CD8-positive, alpha-beta T cell (primary cell): ENCODE measurements at regions of chr11 and their contacts with region 1.

Region 1: DNA sequence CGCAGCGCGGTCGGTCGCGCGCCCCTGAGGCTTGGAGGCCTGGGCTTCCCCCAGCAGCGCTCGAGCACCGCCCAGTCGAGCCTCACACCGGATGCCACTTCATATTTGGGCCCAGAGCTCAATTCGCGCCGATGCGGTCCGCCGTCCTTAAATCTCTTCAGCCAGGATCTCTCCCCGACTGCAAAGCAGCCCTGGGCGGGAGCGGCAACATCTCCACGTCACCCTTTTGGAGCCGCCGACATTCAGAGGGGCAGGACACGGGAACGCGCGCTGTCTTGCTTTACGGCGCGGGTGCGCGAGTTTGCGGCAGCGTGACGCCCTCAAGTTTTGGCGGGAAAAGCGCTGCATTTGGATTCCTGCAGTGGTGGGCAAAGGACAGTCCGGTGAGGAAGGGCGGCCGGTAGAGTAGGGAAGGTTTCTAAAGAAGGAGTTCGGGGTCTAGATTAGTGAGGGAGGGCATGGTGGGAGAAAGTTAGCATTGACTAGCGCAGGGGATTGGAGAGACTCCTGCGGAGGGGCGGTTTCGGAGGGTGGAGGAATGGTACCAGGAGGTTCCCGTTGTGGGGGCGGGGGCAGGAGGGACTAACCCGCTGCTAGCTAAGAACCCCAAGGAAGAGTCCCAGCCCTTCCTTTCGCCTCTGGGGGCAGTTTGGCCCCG is 796 bp downstream of the CHEK1 start:
- DNase-seq: peak; percentile 62 to 90 (median 81)
- ATAC-seq: peak; percentile 91
- H3K4me3 ChIP-seq: peak overlapping the region; percentile 77 to 91
- H3K4me3 Mint-ChIP-seq: peak overlapping the region; percentile 100
- H3K27ac ChIP-seq: peak overlapping the region; percentile 91 to 97
- H3K27ac Mint-ChIP-seq: peak overlapping the region; percentile 97
- H3K4me1 ChIP-seq: peaks cover 12% of the 10 kb centered on the region
- H3K4me1 Mint-ChIP-seq: peaks cover 17% of the 10 kb centered on the region
- H3K27me3 ChIP-seq: no peaks in the 10 kb centered on the region
- H3K27me3 Mint-ChIP-seq: no peaks in the 10 kb centered on the region
- CTCF ChIP-seq: peak; percentile 7

Region 2: GRCh38 chr11:124380585-124380984 is 1245.2 kb before region 1 on chr11:
- CTCF ChIA-PET with region 1: no interaction called
- POLR2A ChIA-PET with region 1: no interaction called
- intact Hi-C with region 1: no loop called
- DNase-seq: no peak
- ATAC-seq: no peak
- H3K4me3 ChIP-seq: no peak overlapping the region
- H3K4me3 Mint-ChIP-seq: no peak overlapping the region
- H3K27ac ChIP-seq: no peak overlapping the region
- H3K27ac Mint-ChIP-seq: no peak overlapping the region
- H3K4me1 ChIP-seq: no peaks in the 10 kb centered on the region
- H3K4me1 Mint-ChIP-seq: no peaks in the 10 kb centered on the region
- H3K27me3 ChIP-seq: no peaks in the 10 kb centered on the region
- H3K27me3 Mint-ChIP-seq: no peaks in the 10 kb centered on the region
- CTCF ChIP-seq: no peak

Region 3: GRCh38 chr11:124622531-124623451 is 1003.0 kb before region 1 on chr11 and contains the start of gene TBRG1:
- CTCF ChIA-PET with region 1: no interaction called
- POLR2A ChIA-PET with region 1: no interaction called
- intact Hi-C with region 1: loop called in 1 of 2 experiments (anchors 10 kb)
- DNase-seq: peak; percentile 62 to 95 (median 84)
- ATAC-seq: peak; percentile 97
- H3K4me3 ChIP-seq: peak within 1 kb of the TSS; percentile 94 to 100
- H3K4me3 Mint-ChIP-seq: peak within 1 kb of the TSS; percentile 97
- H3K27ac ChIP-seq: peak within 1 kb of the TSS; percentile 95 to 97
- H3K27ac Mint-ChIP-seq: peak within 1 kb of the TSS; percentile 99
- H3K4me1 ChIP-seq: peaks cover 16% of the 10 kb centered on the region
- H3K4me1 Mint-ChIP-seq: peaks cover 43% of the 10 kb centered on the region
- H3K27me3 ChIP-seq: no peaks in the 10 kb centered on the region
- H3K27me3 Mint-ChIP-seq: peaks cover 6% of the 10 kb centered on the region
- CTCF ChIP-seq: no peak
- total RNA-seq, gene TBRG1: 59.2 to 61.0 TPM

Region 4: GRCh38 chr11:125592305-125593112 is 33.2 kb before region 1 on chr11 and contains the start of gene STT3A:
- CTCF ChIA-PET with region 1: interaction called, 4 read pairs
- POLR2A ChIA-PET with region 1: interaction called, 35 read pairs
- intact Hi-C with region 1: loop called (anchors 1 kb)
- DNase-seq: peak; percentile 96 to 99 (median 98)
- ATAC-seq: peak; percentile 91
- H3K4me3 ChIP-seq: peak within 1 kb of the TSS; percentile 90 to 97
- H3K4me3 Mint-ChIP-seq: peak within 1 kb of the TSS; percentile 92
- H3K27ac ChIP-seq: peak within 1 kb of the TSS; percentile 88 to 96
- H3K27ac Mint-ChIP-seq: peak within 1 kb of the TSS; percentile 98
- H3K4me1 ChIP-seq: peaks cover 15% of the 10 kb centered on the region
- H3K4me1 Mint-ChIP-seq: peaks cover 43% of the 10 kb centered on the region
- H3K27me3 ChIP-seq: no peaks in the 10 kb centered on the region
- H3K27me3 Mint-ChIP-seq: no peaks in the 10 kb centered on the region
- CTCF ChIP-seq: no peak
- total RNA-seq, gene STT3A: 45.5 to 46.8 TPM

Region 5: DNA sequence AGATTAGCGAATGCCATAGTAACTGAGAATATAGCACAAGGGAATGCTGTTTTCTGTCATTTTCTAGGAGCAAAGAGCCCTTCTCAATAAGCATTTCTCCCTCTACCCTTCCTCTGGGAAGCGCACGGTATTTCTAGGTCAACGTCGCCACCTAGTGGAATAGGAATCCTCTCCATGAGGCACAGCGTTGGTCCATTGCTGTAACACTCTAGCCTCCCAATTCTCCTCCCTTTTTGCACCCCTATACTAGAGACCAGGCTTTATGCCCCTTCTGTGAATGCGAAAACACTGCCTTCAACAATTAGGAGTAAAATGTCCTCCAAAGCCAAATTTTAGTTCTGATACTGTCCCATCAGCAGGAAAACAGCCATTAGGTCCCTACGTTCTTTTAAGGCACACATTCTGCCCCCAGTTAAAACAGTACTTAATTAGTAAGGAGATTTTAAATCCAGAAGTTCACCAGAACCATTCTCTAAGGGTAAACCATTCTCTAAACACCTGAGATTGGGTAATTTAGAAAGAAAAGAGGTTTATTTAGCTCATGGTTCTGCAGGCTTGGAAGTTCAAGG is 248.9 kb after region 1 on chr11:
- CTCF ChIA-PET with region 1: no interaction called
- POLR2A ChIA-PET with region 1: no interaction called
- intact Hi-C with region 1: loop called in 1 of 2 experiments (anchors 1 kb)
- DNase-seq: peak in 7 of 9 experiments; percentile 20 to 64 (median 39)
- ATAC-seq: peak; percentile 29
- H3K4me3 ChIP-seq: no peak overlapping the region
- H3K4me3 Mint-ChIP-seq: no peak overlapping the region
- H3K27ac ChIP-seq: no peak overlapping the region
- H3K27ac Mint-ChIP-seq: no peak overlapping the region
- H3K4me1 ChIP-seq: no peaks in the 10 kb centered on the region
- H3K4me1 Mint-ChIP-seq: peaks cover 1% of the 10 kb centered on the region
- H3K27me3 ChIP-seq: no peaks in the 10 kb centered on the region
- H3K27me3 Mint-ChIP-seq: peaks cover 7% of the 10 kb centered on the region
- CTCF ChIP-seq: peak; percentile 56

Region 6: GRCh38 chr11:125902927-125903710 is 277.4 kb after region 1 on chr11 and contains the start of gene PUS3:
- CTCF ChIA-PET with region 1: no interaction called
- POLR2A ChIA-PET with region 1: interaction called, 3 read pairs
- intact Hi-C with region 1: loop called (anchors 1 to 5 kb)
- DNase-seq: peak; percentile 67 to 91 (median 87)
- ATAC-seq: peak; percentile 92
- H3K4me3 ChIP-seq: peak within 1 kb of the TSS; percentile 58 to 77
- H3K4me3 Mint-ChIP-seq: peak within 1 kb of the TSS; percentile 95
- H3K27ac ChIP-seq: peak within 1 kb of the TSS; percentile 48 to 67
- H3K27ac Mint-ChIP-seq: peak within 1 kb of the TSS; percentile 91
- H3K4me1 ChIP-seq: peaks cover 16% of the 10 kb centered on the region
- H3K4me1 Mint-ChIP-seq: peaks cover 41% of the 10 kb centered on the region
- H3K27me3 ChIP-seq: peaks cover 5 to 7% of the 10 kb centered on the region in 2 experiments
- H3K27me3 Mint-ChIP-seq: peaks cover 19% of the 10 kb centered on the region
- CTCF ChIP-seq: no peak
- total RNA-seq, gene PUS3: 4.5 to 5.2 TPM

Region 7: DNA sequence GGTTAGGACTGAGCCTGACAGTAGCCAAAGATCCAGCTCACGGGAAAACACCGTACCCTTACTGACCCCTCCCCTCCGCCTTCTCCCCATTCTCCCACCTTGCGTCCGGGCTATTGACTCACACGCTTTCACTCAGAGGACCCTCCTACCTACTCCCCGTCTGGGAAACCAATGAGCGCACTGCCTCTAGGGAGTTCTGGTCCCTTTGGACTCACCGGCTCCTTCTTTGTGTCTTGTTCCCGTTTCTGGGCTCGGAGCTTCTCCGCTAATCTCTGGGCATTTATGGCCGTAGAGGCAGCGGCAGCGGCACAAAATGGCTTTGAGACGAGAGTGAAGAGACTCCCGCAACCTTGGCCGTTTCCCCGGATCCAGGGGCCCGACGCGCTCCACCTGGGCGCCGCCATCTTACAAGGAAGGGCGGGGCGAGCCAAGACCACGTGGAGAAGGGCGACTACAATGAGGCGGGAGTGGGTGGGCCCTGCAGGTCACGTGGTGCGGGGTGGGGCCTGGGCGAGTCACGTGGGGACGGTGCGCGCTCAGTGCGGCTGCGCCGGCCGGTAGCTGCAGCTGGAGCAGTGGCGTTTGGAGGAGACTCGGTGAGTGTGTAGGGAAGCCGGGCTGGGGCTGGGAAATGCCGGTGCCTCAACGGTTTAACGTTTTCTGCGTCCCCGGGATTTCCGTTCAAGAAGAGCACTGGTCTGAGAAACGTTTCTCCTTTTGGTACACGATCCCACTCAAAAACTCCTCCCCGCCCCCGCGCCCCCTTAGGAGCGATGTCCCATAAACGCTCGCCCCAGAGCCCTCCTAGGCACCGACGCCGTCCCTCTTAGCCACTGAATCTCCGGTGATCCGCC is 585.7 kb after region 1 on chr11 and contains the starts of genes FAM118B and RPUSD4:
- CTCF ChIA-PET with region 1: no interaction called
- POLR2A ChIA-PET with region 1: no interaction called
- intact Hi-C with region 1: loop called (anchors 10 kb)
- DNase-seq: peak; percentile 98 to 99 (median 98)
- ATAC-seq: peak; percentile 95
- H3K4me3 ChIP-seq: peak within 1 kb of the TSS; percentile 95 to 98
- H3K4me3 Mint-ChIP-seq: peak within 1 kb of the TSS; percentile 99
- H3K27ac ChIP-seq: peak within 1 kb of the TSS; percentile 71 to 80
- H3K27ac Mint-ChIP-seq: peak within 1 kb of the TSS; percentile 95
- H3K4me1 ChIP-seq: peaks cover 18% of the 10 kb centered on the region
- H3K4me1 Mint-ChIP-seq: peaks cover 40% of the 10 kb centered on the region
- H3K27me3 ChIP-seq: no peaks in the 10 kb centered on the region
- H3K27me3 Mint-ChIP-seq: no peaks in the 10 kb centered on the region
- CTCF ChIP-seq: no peak
- total RNA-seq, gene FAM118B: 0.64 to 0.79 TPM
- total RNA-seq, gene RPUSD4: 42.3 to 43.8 TPM